Prostate gland (tissue), 2 donors: ENCODE measurements at regions of chr3 and their contacts with region 1.

Region 1: GRCh38 chr3:194573691-194574437 is 59.4 kb downstream of the TMEM44 start:
- DNase-seq: no peak
- H3K4me3 ChIP-seq: no peak overlapping the region
- H3K27ac ChIP-seq: no peak overlapping the region
- H3K4me1 ChIP-seq: no peaks in the 10 kb centered on the region
- H3K27me3 ChIP-seq: no peaks in the 10 kb centered on the region
- CTCF ChIP-seq: peak in 3 of 4 experiments; percentile 10 to 54 (median 52)
- POLR2A ChIP-seq: no peak

Region 2: GRCh38 chr3:194472290-194472920 is 101.5 kb before region 1 on chr3:
- intact Hi-C with region 1: loop called (anchors 5 kb)
- DNase-seq: peak; percentile 46
- H3K4me3 ChIP-seq: no peak overlapping the region
- H3K27ac ChIP-seq: no peak overlapping the region
- H3K4me1 ChIP-seq: peaks cover 4% of the 10 kb centered on the region
- H3K27me3 ChIP-seq: no peaks in the 10 kb centered on the region
- CTCF ChIP-seq: peak; percentile 87 to 99 (median 95)
- POLR2A ChIP-seq: no peak